Activated naive CD4-positive, alpha-beta T cell treated with anti-CD3 and anti-CD28 coated beads for 36 hours (primary cell): ENCODE measurements at regions of chr16 and their contacts with region 1.

Region 1: GRCh38 chr16:21300309-21301167 is 22.4 kb upstream of the CRYM start:
- DNase-seq: peak; percentile 86
- H3K4me3 Mint-ChIP-seq: peak overlapping the region; percentile 90
- H3K27ac Mint-ChIP-seq: no peak overlapping the region
- H3K4me1 Mint-ChIP-seq: peaks cover 20% of the 10 kb centered on the region
- H3K27me3 Mint-ChIP-seq: peaks cover 17% of the 10 kb centered on the region

Region 2: GRCh38 chr16:20900299-20901067 is 400.1 kb before region 1 on chr16 and contains the starts of genes DCUN1D3 and LYRM1:
- CTCF ChIA-PET with region 1: no interaction called
- intact Hi-C with region 1: loop called (anchors 5 kb)
- DNase-seq: peak; percentile 88
- H3K4me3 Mint-ChIP-seq: peak within 1 kb of the TSS; percentile 96
- H3K27ac Mint-ChIP-seq: peak within 1 kb of the TSS; percentile 98
- H3K4me1 Mint-ChIP-seq: peaks cover 59% of the 10 kb centered on the region
- H3K27me3 Mint-ChIP-seq: no peaks in the 10 kb centered on the region
- total RNA-seq, gene DCUN1D3: 3.0 to 3.4 TPM
- total RNA-seq, gene LYRM1: 20.4 to 20.8 TPM

Region 3: DNA sequence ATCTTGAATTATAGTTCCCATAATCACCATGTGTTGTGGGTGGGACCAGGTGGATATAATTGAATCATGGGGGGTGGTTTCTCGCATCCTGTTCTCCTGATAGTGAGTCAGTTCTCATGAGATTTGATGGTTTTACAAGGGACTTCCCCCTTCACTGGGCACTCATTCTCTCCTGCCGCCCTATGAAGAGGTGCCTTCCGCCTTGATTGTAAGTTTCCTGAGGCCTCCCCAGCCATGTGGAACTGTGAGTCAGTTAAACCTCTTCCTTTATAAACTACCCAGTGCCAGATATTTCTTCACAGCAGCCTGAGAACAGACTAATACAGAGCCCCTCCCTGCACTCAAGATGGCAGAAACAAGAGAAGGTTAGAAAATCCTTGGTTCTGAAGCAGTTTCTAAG is 115.7 kb before region 1 on chr16:
- CTCF ChIA-PET with region 1: interaction called, 17 read pairs
- intact Hi-C with region 1: loop called (anchors 1 kb)
- DNase-seq: peak; percentile 53
- H3K4me3 Mint-ChIP-seq: no peak overlapping the region
- H3K27ac Mint-ChIP-seq: no peak overlapping the region
- H3K4me1 Mint-ChIP-seq: peaks cover 16% of the 10 kb centered on the region
- H3K27me3 Mint-ChIP-seq: no peaks in the 10 kb centered on the region

Region 4: GRCh38 chr16:21554795-21555585 is 254.5 kb after region 1 on chr16:
- CTCF ChIA-PET with region 1: interaction called, 3 read pairs
- intact Hi-C with region 1: loop called (anchors 2 kb)
- DNase-seq: peak; percentile 96
- H3K4me3 Mint-ChIP-seq: peak overlapping the region; percentile 33
- H3K27ac Mint-ChIP-seq: no peak overlapping the region
- H3K4me1 Mint-ChIP-seq: peaks cover 9% of the 10 kb centered on the region
- H3K27me3 Mint-ChIP-seq: peaks cover 10% of the 10 kb centered on the region

Region 5: GRCh38 chr16:22374311-22375116 is 1074.0 kb after region 1 on chr16 and contains the start of gene CDR2:
- CTCF ChIA-PET with region 1: no interaction called
- intact Hi-C with region 1: loop called (anchors 5 kb)
- DNase-seq: peak; percentile 99
- H3K4me3 Mint-ChIP-seq: peak within 1 kb of the TSS; percentile 92
- H3K27ac Mint-ChIP-seq: peak within 1 kb of the TSS; percentile 89
- H3K4me1 Mint-ChIP-seq: peaks cover 37% of the 10 kb centered on the region
- H3K27me3 Mint-ChIP-seq: no peaks in the 10 kb centered on the region
- total RNA-seq, gene CDR2: 42.5 to 42.8 TPM